ENCODE measurements at regions of chr9 and their contacts with region 1.

Region 1: GRCh38 chr9:76161541-76161940 is 232.7 kb downstream of the RFK start:
- DNase-seq: no peak
- H3K4me3 ChIP-seq: no peak overlapping the region
- H3K27ac ChIP-seq: peak overlapping the region in 9 of 59 donors; percentile 3 to 42 (median 21)
- H3K27me3 ChIP-seq: no peaks in the 10 kb centered on the region
- CTCF ChIP-seq: no peak

Region 2: DNA sequence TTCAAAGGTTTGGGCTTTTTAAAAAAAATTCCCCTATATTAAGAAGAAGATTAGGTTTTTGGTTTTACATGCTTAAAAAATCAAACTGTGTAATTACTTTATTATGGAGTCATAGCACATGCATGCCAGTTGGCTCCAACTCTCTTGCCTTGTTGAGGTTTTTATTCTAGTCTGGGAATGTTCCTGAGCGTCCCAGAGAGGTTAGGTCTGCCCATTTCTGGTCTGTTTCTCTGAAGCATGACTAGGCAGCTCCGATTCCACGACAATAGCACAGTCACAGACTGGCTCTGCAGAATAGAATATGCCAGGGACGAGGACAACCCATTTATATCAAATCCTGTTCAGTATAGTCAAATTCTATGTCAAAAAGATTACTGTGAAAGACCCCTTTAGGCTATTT is 54.1 kb before region 1 on chr9:
- intact Hi-C with region 1: loop called in 1 of 2 experiments (anchors 10 kb)
- DNase-seq: peak in 1 of 10 donors; percentile 14
- H3K4me3 ChIP-seq: no peak overlapping the region
- H3K27ac ChIP-seq: peak overlapping the region in 10 of 59 donors; percentile 6 to 68 (median 33)
- H3K27me3 ChIP-seq: no peaks in the 10 kb centered on the region
- CTCF ChIP-seq: no peak

Measured in dorsolateral prefrontal cortex (tissue), 120 donors.